Thyroid gland (tissue), 4 donors: ENCODE measurements at regions of chr18 and their contacts with region 1.

Region 1: DNA sequence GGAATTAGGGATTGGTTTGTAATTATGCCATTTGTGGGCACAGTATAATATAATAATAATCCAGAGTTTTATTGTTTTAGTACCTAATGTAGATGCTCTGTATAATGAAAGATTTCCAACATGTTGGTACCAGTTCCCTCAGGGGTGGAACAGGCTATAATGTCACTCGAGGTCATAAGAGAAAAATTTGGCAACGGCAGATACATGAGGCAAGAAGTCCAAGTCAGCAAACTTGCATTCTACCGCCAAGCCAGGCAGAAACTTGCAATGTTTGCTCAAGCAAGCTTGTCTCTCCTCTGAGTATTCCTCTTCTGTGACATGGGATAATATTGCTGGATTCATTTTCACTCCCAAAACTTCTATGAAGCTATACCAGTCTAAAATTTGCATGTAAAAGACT is 520.0 kb upstream of the SALL3 start:
- DNase-seq: no peak
- H3K4me3 ChIP-seq: no peak overlapping the region
- H3K27ac ChIP-seq: no peak overlapping the region
- H3K4me1 ChIP-seq: no peaks in the 10 kb centered on the region
- H3K27me3 ChIP-seq: no peaks in the 10 kb centered on the region
- CTCF ChIP-seq: no peak
- POLR2A ChIP-seq: no peak

Region 2: GRCh38 chr18:78228974-78229373 is 230.7 kb before region 1 on chr18:
- intact Hi-C with region 1: no loop called
- DNase-seq: no peak
- H3K4me3 ChIP-seq: no peak overlapping the region
- H3K27ac ChIP-seq: no peak overlapping the region
- H3K4me1 ChIP-seq: no peaks in the 10 kb centered on the region
- H3K27me3 ChIP-seq: no peaks in the 10 kb centered on the region
- CTCF ChIP-seq: no peak
- POLR2A ChIP-seq: no peak

Region 3: GRCh38 chr18:78255013-78255412 is 204.7 kb before region 1 on chr18:
- intact Hi-C with region 1: no loop called
- DNase-seq: no peak
- H3K4me3 ChIP-seq: no peak overlapping the region
- H3K27ac ChIP-seq: no peak overlapping the region
- H3K4me1 ChIP-seq: no peaks in the 10 kb centered on the region
- H3K27me3 ChIP-seq: no peaks in the 10 kb centered on the region
- CTCF ChIP-seq: no peak
- POLR2A ChIP-seq: no peak

Region 4: DNA sequence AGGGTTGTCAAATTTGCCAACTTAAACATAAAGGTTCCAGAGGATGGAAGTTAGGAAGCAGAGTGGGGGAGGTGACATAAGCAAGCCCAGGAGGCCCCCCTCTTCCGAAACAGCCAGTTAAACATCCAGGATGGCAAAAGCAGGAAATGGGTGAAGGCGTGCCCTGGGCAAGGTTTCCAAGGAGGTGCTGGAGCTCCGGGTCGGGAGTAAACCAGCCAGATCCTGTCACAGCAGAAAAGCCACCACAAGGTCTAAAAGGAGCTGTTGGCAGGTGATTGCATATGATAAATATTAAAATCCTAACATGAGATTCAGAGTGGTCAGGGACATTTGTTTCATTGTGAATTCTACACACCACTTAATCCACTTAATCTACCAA is 52.2 kb before region 1 on chr18:
- intact Hi-C with region 1: loop called (anchors 10 kb)
- DNase-seq: no peak
- H3K4me3 ChIP-seq: no peak overlapping the region
- H3K27ac ChIP-seq: no peak overlapping the region
- H3K4me1 ChIP-seq: no peaks in the 10 kb centered on the region
- H3K27me3 ChIP-seq: no peaks in the 10 kb centered on the region
- CTCF ChIP-seq: no peak
- POLR2A ChIP-seq: no peak

Region 5: GRCh38 chr18:78548261-78549058 is 88.8 kb after region 1 on chr18:
- intact Hi-C with region 1: no loop called
- DNase-seq: no peak
- H3K4me3 ChIP-seq: no peak overlapping the region
- H3K27ac ChIP-seq: no peak overlapping the region
- H3K4me1 ChIP-seq: no peaks in the 10 kb centered on the region
- H3K27me3 ChIP-seq: no peaks in the 10 kb centered on the region
- CTCF ChIP-seq: no peak
- POLR2A ChIP-seq: no peak

Region 6: GRCh38 chr18:78770139-78770822 is 310.6 kb after region 1 on chr18:
- intact Hi-C with region 1: no loop called
- DNase-seq: no peak
- H3K4me3 ChIP-seq: no peak overlapping the region
- H3K27ac ChIP-seq: no peak overlapping the region
- H3K4me1 ChIP-seq: no peaks in the 10 kb centered on the region
- H3K27me3 ChIP-seq: no peaks in the 10 kb centered on the region
- CTCF ChIP-seq: no peak
- POLR2A ChIP-seq: no peak